Activated CD8-positive, alpha-beta memory T cell treated with anti-CD3 and anti-CD28 coated beads, Interleukin-2, amount 10 ng/mL, durations not matched to agents 7 days and 5 days (primary cell): ENCODE measurements at regions of chr2 and their contacts with region 1.

Region 1: GRCh38 chr2:99337113-99338028 is at the start of gene EIF5B:
- DNase-seq: peak; percentile 96
- ATAC-seq: peak; percentile 78
- H3K4me3 Mint-ChIP-seq: no peak within 1 kb of the TSS
- H3K27ac Mint-ChIP-seq: no peak within 1 kb of the TSS
- H3K4me1 Mint-ChIP-seq: peaks cover 49% of the 10 kb centered on the region
- H3K27me3 Mint-ChIP-seq: no peaks in the 10 kb centered on the region
- total RNA-seq, gene EIF5B: 45.0 to 62.1 TPM

Region 2: GRCh38 chr2:99299580-99299979 is 37.8 kb before region 1 on chr2:
- CTCF ChIA-PET with region 1: no interaction called
- DNase-seq: no peak
- ATAC-seq: no peak
- H3K4me3 Mint-ChIP-seq: no peak overlapping the region
- H3K27ac Mint-ChIP-seq: no peak overlapping the region
- H3K4me1 Mint-ChIP-seq: no peaks in the 10 kb centered on the region
- H3K27me3 Mint-ChIP-seq: no peaks in the 10 kb centered on the region

Region 3: GRCh38 chr2:99348173-99348572 is 10.8 kb after region 1 on chr2:
- CTCF ChIA-PET with region 1: interaction called, 12 read pairs
- DNase-seq: no peak
- ATAC-seq: no peak
- H3K4me3 Mint-ChIP-seq: no peak overlapping the region
- H3K27ac Mint-ChIP-seq: peak overlapping the region; percentile 7
- H3K4me1 Mint-ChIP-seq: peaks cover 36% of the 10 kb centered on the region
- H3K27me3 Mint-ChIP-seq: no peaks in the 10 kb centered on the region

Region 4: DNA sequence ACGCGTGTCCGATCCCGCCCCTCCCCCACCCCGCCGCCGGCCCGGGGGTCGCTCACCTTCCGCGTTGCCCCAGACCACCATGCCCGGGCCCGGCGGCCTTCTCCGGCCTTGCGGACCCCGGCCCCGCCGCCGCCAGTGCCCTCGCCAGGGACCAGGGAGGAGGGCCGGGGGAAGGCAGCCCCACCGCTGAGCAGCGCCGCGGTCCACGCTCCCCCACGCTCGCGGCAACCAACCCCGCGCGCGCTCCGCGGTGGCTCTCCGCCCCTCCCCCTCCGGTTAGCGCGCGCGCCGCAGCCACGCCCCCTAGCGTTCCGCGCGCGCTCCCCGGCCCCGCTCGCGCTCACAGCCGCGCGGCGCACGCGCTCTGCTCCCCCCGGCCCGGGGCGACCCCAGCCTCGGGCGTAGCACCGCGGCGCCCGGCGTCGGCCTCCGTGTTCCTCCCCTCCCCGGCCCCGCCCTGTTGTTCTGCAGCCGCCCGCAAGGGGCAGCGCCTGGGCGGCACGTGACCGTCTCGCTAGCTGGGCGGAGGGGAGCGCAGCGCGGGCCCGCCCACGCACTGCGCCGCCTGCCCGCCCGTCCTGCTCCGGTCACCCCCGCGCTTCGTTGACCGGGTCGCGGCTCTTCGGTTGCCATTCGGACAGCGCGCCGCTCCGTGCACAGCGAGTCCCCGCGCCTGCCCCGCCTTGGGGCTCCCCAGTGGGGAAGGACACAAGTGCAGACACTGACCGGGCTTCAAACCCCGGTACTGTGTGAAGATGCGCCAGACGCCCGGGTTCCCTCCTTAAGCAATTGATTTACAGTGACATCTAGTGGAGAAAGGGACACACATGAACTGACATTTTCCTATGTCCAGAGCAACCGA is 152.6 kb after region 1 on chr2 and contains the start of gene REV1:
- CTCF ChIA-PET with region 1: interaction called, 20 read pairs
- DNase-seq: peak; percentile 92
- ATAC-seq: peak; percentile 88
- H3K4me3 Mint-ChIP-seq: peak within 1 kb of the TSS; percentile 98
- H3K27ac Mint-ChIP-seq: peak within 1 kb of the TSS; percentile 96
- H3K4me1 Mint-ChIP-seq: peaks cover 34% of the 10 kb centered on the region
- H3K27me3 Mint-ChIP-seq: no peaks in the 10 kb centered on the region
- total RNA-seq, gene REV1: 37.7 to 41.8 TPM